K562 (cell line): ENCODE measurements at regions of chr9 and their contacts with region 1.

Region 1: GRCh38 chr9:137240861-137241489 is at the start of gene TUBB4B:
- DNase-seq: peak; percentile 88 to 100 (median 94)
- ATAC-seq: peak; percentile 80
- H3K4me3 ChIP-seq: peak within 1 kb of the TSS; percentile 96
- H3K27ac ChIP-seq: peak within 1 kb of the TSS; percentile 98
- H3K4me1 ChIP-seq: peaks cover 33 to 91% of the 10 kb centered on the region in 2 experiments
- H3K27me3 ChIP-seq: no peaks in the 10 kb centered on the region
- CTCF ChIP-seq: no peak; a peak in 1 of 6 replicates
- EP300 ChIP-seq: no peak; the same call in none of the 2 replicates
- POLR2A ChIP-seq: peak; percentile 100
- RAD21 ChIP-seq: 0 out of 4 replicates have a peak, but pooled peaks of 1 of the 2 experiments have one; percentile 4
- polyA plus RNA-seq, gene TUBB4B: 24.1 to 51.3 TPM

Region 2: DNA sequence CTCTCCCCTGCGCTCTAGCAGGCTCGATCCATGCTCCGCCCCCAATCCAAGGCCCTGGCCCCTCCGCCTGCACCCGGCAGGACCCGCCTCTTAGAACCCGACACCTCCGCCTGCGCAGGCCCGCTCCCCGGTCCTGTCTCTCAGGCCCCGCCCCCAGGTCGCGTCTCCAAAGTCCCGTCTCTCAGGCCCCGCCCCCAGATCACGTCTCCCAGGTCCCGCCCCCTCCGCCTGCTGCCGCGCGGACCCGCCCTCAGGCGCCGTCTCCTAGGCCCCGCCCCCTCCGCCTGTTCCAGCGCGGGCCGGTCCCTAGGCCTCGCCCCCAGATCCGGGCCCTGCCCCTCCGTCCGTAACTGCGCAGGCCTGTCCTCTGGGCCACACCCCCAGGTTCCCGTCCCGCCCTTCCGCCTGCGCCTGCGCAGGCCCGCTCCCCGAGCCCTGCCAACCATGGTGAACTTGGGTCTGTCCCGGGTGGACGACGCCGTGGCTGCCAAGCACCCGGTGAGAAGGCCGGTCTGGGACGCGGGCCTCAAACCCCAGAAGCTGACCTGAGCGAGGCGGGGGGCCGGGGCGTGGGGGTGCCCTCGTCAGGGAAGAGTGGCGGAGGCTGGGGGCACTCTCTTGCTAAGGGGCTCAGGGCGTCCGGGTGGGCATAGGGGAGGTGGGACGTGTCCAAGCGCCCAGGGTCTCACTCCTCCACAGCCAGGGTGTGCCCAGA is 449.9 kb before region 1 on chr9 and contains the start of gene TMEM141:
- CTCF ChIA-PET with region 1: no interaction called
- POLR2A ChIA-PET with region 1: no interaction called
- in situ Hi-C with region 1: loop called (anchors 25 kb)
- intact Hi-C with region 1: loop called (anchors 10 kb)
- DNase-seq: peak; percentile 93 to 99 (median 96)
- ATAC-seq: peak; percentile 91
- H3K4me3 ChIP-seq: peak within 1 kb of the TSS; percentile 58
- H3K27ac ChIP-seq: peak within 1 kb of the TSS; percentile 93
- H3K4me1 ChIP-seq: peaks cover 57 to 65% of the 10 kb centered on the region in 2 experiments
- H3K27me3 ChIP-seq: no peaks in the 10 kb centered on the region
- CTCF ChIP-seq: no peak; a peak in 1 of 6 replicates
- EP300 ChIP-seq: 0 out of 2 replicates have a peak, but pooled peaks have one; percentile 3
- POLR2A ChIP-seq: peak; percentile 74
- RAD21 ChIP-seq: no peak
- polyA plus RNA-seq, gene TMEM141: 21.5 to 35.8 TPM

Region 3: GRCh38 chr9:137034863-137035761 is 205.9 kb before region 1 on chr9:
- CTCF ChIA-PET with region 1: no interaction called
- POLR2A ChIA-PET with region 1: no interaction called
- in situ Hi-C with region 1: no loop called
- intact Hi-C with region 1: no loop called
- DNase-seq: peak; percentile 80 to 90 (median 81)
- ATAC-seq: peak; percentile 98
- H3K4me3 ChIP-seq: no peak overlapping the region
- H3K27ac ChIP-seq: no peak overlapping the region
- H3K4me1 ChIP-seq: peaks cover 0 to 69% of the 10 kb centered on the region in 2 experiments; a peak in 3 of 5 replicates
- H3K27me3 ChIP-seq: peaks cover 0 to 14% of the 10 kb centered on the region in 2 experiments; a peak in 1 of 5 replicates
- CTCF ChIP-seq: peak; percentile 94 to 95 (median 95)
- EP300 ChIP-seq: no peak
- POLR2A ChIP-seq: no peak
- RAD21 ChIP-seq: peak; percentile 85 to 95

Region 4: DNA sequence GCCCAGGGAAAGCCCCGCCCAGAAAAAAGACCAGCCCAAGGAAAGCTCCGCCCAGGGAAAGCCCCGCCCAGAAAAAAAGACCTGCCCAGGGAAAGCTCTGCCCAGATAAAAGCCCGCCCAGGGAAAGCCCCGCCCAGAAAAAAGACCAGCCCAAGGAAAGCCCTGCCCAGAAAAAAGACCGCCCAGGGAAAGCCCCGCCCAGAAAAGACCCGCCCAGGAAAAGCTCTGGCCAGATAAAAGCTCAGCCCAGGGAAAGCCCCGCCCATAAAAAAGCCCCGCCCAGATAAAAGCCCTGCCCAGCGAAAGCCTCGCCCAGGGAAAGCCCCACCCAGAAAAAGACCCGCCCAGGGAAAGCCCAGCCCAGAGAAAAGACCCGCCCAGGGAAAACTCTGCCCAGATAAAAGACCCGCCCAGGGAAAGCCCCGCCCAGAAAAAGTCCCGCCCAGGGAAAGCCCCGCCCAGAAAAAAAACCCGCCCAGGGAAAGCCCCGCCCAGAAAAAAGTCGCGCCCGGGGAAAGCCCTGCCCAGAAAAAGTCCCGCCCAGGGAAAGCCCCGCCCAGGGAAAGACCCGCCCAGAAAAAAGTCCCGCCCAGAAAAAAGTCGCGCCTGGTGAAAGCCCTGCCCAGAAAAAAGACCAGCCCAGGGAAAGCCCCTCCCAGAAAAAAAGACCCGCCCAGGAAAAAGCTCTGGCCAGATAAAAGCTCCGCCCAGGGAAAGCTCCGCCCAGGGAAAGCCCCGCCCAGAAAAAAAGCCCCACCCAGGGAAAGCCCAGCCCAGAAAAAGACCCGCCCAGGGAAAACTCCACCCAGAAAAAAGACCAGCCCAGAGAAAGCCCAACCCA is 90.1 kb before region 1 on chr9:
- CTCF ChIA-PET with region 1: no interaction called
- POLR2A ChIA-PET with region 1: interaction called, 11 read pairs
- in situ Hi-C with region 1: no loop called
- intact Hi-C with region 1: no loop called
- DNase-seq: peak; percentile 82 to 93 (median 88)
- ATAC-seq: peak; percentile 87
- H3K4me3 ChIP-seq: peak overlapping the region; percentile 21; the same call in 1 of the 2 replicates
- H3K27ac ChIP-seq: peak overlapping the region; percentile 52; the same call in 1 of the 3 replicates
- H3K4me1 ChIP-seq: peaks cover 8 to 53% of the 10 kb centered on the region in 2 experiments; a peak in 3 of 5 replicates
- H3K27me3 ChIP-seq: no peaks in the 10 kb centered on the region
- CTCF ChIP-seq: no peak
- EP300 ChIP-seq: no peak
- POLR2A ChIP-seq: no peak
- RAD21 ChIP-seq: no peak

Region 5: GRCh38 chr9:137188490-137189296 is 52.3 kb before region 1 on chr9 and contains the starts of genes ANAPC2 and SSNA1:
- CTCF ChIA-PET with region 1: interaction called, 11 read pairs
- POLR2A ChIA-PET with region 1: interaction called, 18 read pairs
- in situ Hi-C with region 1: no loop called
- intact Hi-C with region 1: no loop called
- DNase-seq: peak; percentile 93 to 98 (median 96)
- ATAC-seq: peak; percentile 96
- H3K4me3 ChIP-seq: peak within 1 kb of the TSS; percentile 98
- H3K27ac ChIP-seq: peak within 1 kb of the TSS; percentile 94
- H3K4me1 ChIP-seq: peaks cover 20 to 95% of the 10 kb centered on the region in 2 experiments
- H3K27me3 ChIP-seq: no peaks in the 10 kb centered on the region
- CTCF ChIP-seq: peak; percentile 59 to 91 (median 83)
- EP300 ChIP-seq: peak; percentile 52
- POLR2A ChIP-seq: peak; percentile 82
- RAD21 ChIP-seq: peak; percentile 83
- polyA plus RNA-seq, gene ANAPC2: 0.11 TPM in 1 of 2 experiments, not detected in the other
- polyA plus RNA-seq, gene SSNA1: 1.9 to 11.8 TPM

Region 6: GRCh38 chr9:137217276-137218211 is 23.4 kb before region 1 on chr9:
- CTCF ChIA-PET with region 1: no interaction called
- POLR2A ChIA-PET with region 1: interaction called, 13 read pairs
- in situ Hi-C with region 1: no loop called
- intact Hi-C with region 1: no loop called
- DNase-seq: peak; percentile 84 to 92 (median 88)
- ATAC-seq: peak; percentile 88
- H3K4me3 ChIP-seq: peak overlapping the region; percentile 40
- H3K27ac ChIP-seq: peak overlapping the region; percentile 72
- H3K4me1 ChIP-seq: peaks cover 28 to 88% of the 10 kb centered on the region in 2 experiments
- H3K27me3 ChIP-seq: no peaks in the 10 kb centered on the region
- CTCF ChIP-seq: peak in 1 of 3 experiments; percentile 27; a peak in 2 of 6 replicates
- EP300 ChIP-seq: no peak
- POLR2A ChIP-seq: peak; percentile 70
- RAD21 ChIP-seq: no peak; a peak in 1 of 4 replicates

Region 7: GRCh38 chr9:137254624-137255447 is 13.9 kb after region 1 on chr9 and contains the start of gene NELFB:
- CTCF ChIA-PET with region 1: interaction called, 3 read pairs
- POLR2A ChIA-PET with region 1: interaction called, 221 read pairs
- in situ Hi-C with region 1: no loop called
- intact Hi-C with region 1: loop called (anchors 2 kb)
- DNase-seq: peak; percentile 94 to 99 (median 98)
- ATAC-seq: peak; percentile 82
- H3K4me3 ChIP-seq: peak within 1 kb of the TSS; percentile 100
- H3K27ac ChIP-seq: peak within 1 kb of the TSS; percentile 84
- H3K4me1 ChIP-seq: peaks cover 13 to 68% of the 10 kb centered on the region in 2 experiments
- H3K27me3 ChIP-seq: no peaks in the 10 kb centered on the region
- CTCF ChIP-seq: 0 out of 6 replicates have a peak, but pooled peaks of 1 of the 3 experiments have one; percentile 7
- EP300 ChIP-seq: no peak
- POLR2A ChIP-seq: peak; percentile 85
- RAD21 ChIP-seq: no peak
- polyA plus RNA-seq, gene NELFB: 0.24 to 0.49 TPM

Region 8: DNA sequence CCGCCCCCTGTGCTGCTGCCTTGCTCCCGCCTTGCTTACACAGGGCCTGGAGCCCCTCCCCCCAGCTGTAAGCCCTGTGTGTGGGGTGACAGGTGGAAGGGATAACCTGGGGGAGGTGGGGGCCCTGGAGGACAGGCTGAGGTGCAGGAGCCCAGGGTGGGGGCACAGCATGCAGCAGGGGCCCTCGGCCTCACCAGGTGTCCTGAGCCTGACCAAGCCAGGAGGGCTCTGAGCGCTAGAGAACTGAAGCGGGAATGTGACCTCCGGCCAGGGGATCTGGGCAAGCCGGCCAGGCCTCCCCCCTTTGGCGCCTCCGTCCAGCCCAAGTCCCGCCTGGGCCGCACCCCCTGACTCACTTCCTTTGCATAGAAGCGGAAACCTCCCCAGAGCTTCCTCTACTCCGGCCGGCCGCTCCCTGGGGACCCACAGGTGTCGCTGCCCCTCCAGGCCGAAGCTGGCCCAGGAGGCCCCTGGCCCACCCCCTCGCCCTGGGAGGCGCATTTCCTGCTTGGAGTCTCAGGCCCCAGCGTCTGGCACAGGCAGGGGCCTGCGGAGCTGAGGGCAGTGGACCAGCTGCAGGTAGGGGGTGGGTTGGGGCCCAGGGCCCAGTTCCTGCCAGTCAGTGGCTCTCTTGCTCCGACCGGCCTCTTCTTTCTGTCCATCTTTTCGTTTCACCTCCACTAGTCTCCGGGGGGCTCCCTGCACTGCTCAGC is 36.5 kb after region 1 on chr9 and contains the start of gene TOR4A:
- CTCF ChIA-PET with region 1: no interaction called
- POLR2A ChIA-PET with region 1: interaction called, 19 read pairs
- in situ Hi-C with region 1: no loop called
- intact Hi-C with region 1: loop called (anchors 1 kb)
- DNase-seq: peak; percentile 90 to 97 (median 92)
- ATAC-seq: peak; percentile 93
- H3K4me3 ChIP-seq: peak within 1 kb of the TSS; percentile 88
- H3K27ac ChIP-seq: peak within 1 kb of the TSS; percentile 98
- H3K4me1 ChIP-seq: peaks cover 17 to 93% of the 10 kb centered on the region in 2 experiments
- H3K27me3 ChIP-seq: no peaks in the 10 kb centered on the region
- CTCF ChIP-seq: peak; percentile 63 to 81 (median 74)
- EP300 ChIP-seq: peak; percentile 47; the same call in 1 of the 2 replicates
- POLR2A ChIP-seq: peak; percentile 85
- RAD21 ChIP-seq: peak; percentile 33 to 58
- polyA plus RNA-seq, gene TOR4A: 3.9 to 7.0 TPM